Activated CD4-positive, alpha-beta T cell treated with anti-CD3 and anti-CD28 coated beads, Interleukin-2, amount 10 ng/mL, durations not matched to agents 24 days and 14 days (primary cell): ENCODE measurements at regions of chr11 and their contacts with region 1.

Region 1: DNA sequence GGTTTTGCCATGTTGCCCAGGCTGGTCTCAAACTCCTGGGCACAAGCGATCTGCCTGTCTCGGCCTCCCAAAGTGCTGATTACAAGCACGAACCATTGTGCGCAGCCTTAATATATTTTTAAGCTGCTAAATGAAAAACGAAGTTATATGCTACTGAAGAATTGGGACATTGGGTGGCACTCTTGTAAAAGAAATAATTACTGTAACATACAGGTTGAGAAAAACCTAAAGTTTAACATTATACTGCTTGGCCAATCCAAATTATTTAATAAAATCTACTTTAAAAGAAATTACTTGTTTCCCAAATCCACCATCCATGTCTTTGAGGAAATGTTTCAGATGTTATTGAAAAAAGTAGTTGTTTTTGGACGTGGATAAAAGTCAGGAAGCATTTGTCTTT is 37.9 kb upstream of the ARHGAP32 start:
- DNase-seq: no peak
- H3K4me3 Mint-ChIP-seq: no peak overlapping the region
- H3K27ac Mint-ChIP-seq: no peak overlapping the region
- H3K4me1 Mint-ChIP-seq: no peaks in the 10 kb centered on the region
- H3K27me3 Mint-ChIP-seq: peaks cover 4% of the 10 kb centered on the region

Region 2: GRCh38 chr11:129331871-129332274 is 101.9 kb after region 1 on chr11:
- intact Hi-C with region 1: loop called (anchors 2 kb)
- DNase-seq: peak; percentile 89
- H3K4me3 Mint-ChIP-seq: no peak overlapping the region
- H3K27ac Mint-ChIP-seq: no peak overlapping the region
- H3K4me1 Mint-ChIP-seq: peaks cover 2% of the 10 kb centered on the region
- H3K27me3 Mint-ChIP-seq: peaks cover 3% of the 10 kb centered on the region